ENCODE measurements at regions of chr13 and their contacts with region 1.

Region 1: DNA sequence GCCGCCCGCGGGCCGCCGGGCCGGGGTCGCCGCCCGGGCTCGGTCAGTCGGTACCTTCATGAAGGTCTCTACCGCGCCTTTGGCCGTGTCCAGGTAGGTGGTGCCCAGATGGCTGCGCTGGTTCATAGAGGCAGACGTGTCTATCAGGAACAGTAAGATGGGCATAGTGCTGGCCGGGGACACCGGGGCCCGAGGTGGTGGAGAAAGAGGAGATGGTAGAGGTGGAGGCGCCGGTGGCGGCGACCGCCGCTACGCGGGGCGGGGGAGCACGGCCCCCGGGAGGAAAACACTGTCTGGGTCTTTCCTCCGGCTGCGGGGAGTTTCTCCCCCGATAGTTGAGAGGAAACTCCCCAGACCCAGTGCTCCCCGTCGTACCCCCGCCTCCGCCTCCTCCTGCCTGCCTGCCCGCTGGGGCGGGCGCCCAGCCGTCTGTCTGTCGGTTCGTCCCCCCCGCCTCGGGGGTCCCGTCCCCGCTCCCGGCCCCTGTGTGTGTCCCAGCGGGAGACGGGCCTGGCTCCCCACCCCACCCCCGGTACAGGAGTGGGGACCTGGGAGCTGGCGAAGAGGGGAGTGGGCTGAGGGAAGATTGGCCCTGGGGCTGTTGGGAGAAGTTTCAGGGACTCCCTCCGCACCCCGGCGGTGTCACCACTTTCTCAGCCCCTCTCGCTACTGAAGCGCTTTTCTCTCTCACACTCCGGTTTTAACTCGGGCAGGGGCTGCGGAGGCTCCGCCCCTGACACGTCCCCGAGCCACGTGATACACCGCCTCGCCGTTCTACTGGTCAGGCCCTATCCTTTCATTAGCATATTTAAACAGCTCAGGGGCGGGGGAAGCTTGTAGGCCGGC is at the start of gene INTS6:
- DNase-seq: peak; percentile 99
- H3K4me3 ChIP-seq: peak within 1 kb of the TSS; percentile 87
- H3K4me1 ChIP-seq: peaks cover 18% of the 10 kb centered on the region
- H3K27me3 ChIP-seq: no peaks in the 10 kb centered on the region

Region 2: GRCh38 chr13:51112771-51113170 is 339.8 kb before region 1 on chr13:
- in situ Hi-C with region 1: no loop called
- DNase-seq: no peak
- H3K4me3 ChIP-seq: no peak overlapping the region
- H3K4me1 ChIP-seq: no peaks in the 10 kb centered on the region
- H3K27me3 ChIP-seq: no peaks in the 10 kb centered on the region

Region 3: GRCh38 chr13:51583875-51584730 is 131.5 kb after region 1 on chr13 and contains the start of gene WDFY2:
- in situ Hi-C with region 1: loop called (anchors 10 kb)
- DNase-seq: peak; percentile 99
- H3K4me3 ChIP-seq: peak within 1 kb of the TSS; percentile 76
- H3K4me1 ChIP-seq: peaks cover 30% of the 10 kb centered on the region
- H3K27me3 ChIP-seq: no peaks in the 10 kb centered on the region

Measured in HAP-1 (cell line).